ENCODE measurements at regions of chr16 and their contacts with region 1.

Region 1: GRCh38 chr16:75566040-75566810 is at the start of gene GABARAPL2:
- DNase-seq: peak; percentile 67 to 95 (median 87)
- ATAC-seq: peak; percentile 79 to 88 (median 86)
- H3K4me3 ChIP-seq: peak within 1 kb of the TSS; percentile 68 to 94
- H3K4me3 Mint-ChIP-seq: peak within 1 kb of the TSS; percentile 89 to 100 (median 99)
- H3K27ac ChIP-seq: peak within 1 kb of the TSS; percentile 83
- H3K27ac Mint-ChIP-seq: peak within 1 kb of the TSS; percentile 89 to 95
- H3K4me1 ChIP-seq: peaks cover 6 to 37% of the 10 kb centered on the region in 2 experiments
- H3K4me1 Mint-ChIP-seq: peaks cover 38 to 50% (median 48%) of the 10 kb centered on the region in 3 donors
- H3K27me3 ChIP-seq: peaks cover 0 to 4% of the 10 kb centered on the region in 2 experiments
- H3K27me3 Mint-ChIP-seq: peaks cover 9 to 10% of the 10 kb centered on the region in 2 donors
- total RNA-seq, gene GABARAPL2: 70.9 to 78.6 (median 76.4) TPM

Region 2: GRCh38 chr16:75265845-75266701 is 300.2 kb before region 1 on chr16:
- CTCF ChIA-PET with region 1: no interaction called
- POLR2A ChIA-PET with region 1: no interaction called
- DNase-seq: peak in 1 of 35 experiments; percentile 17
- ATAC-seq: peak in 2 of 4 experiments; percentile 15 to 17
- H3K4me3 ChIP-seq: peak overlapping the region; percentile 30 to 60
- H3K4me3 Mint-ChIP-seq: peak overlapping the region; percentile 76 to 77 (median 77)
- H3K27ac ChIP-seq: no peak overlapping the region
- H3K27ac Mint-ChIP-seq: peak overlapping the region; percentile 39 to 62
- H3K4me1 ChIP-seq: peaks cover 0 to 18% of the 10 kb centered on the region in 2 experiments
- H3K4me1 Mint-ChIP-seq: peaks cover 5 to 14% (median 8%) of the 10 kb centered on the region in 3 donors
- H3K27me3 ChIP-seq: peaks cover 0 to 73% of the 10 kb centered on the region in 2 experiments
- H3K27me3 Mint-ChIP-seq: peaks cover 32 to 49% of the 10 kb centered on the region in 2 donors

Region 3: GRCh38 chr16:75519881-75520280 is 46.3 kb before region 1 on chr16:
- CTCF ChIA-PET with region 1: interaction called, 14 to 24 read pairs
- POLR2A ChIA-PET with region 1: no interaction called
- DNase-seq: no peak
- ATAC-seq: no peak
- H3K4me3 ChIP-seq: no peak overlapping the region
- H3K4me3 Mint-ChIP-seq: no peak overlapping the region
- H3K27ac ChIP-seq: no peak overlapping the region
- H3K27ac Mint-ChIP-seq: no peak overlapping the region
- H3K4me1 ChIP-seq: peaks cover 0 to 14% of the 10 kb centered on the region in 2 experiments
- H3K4me1 Mint-ChIP-seq: peaks cover 11 to 13% (median 12%) of the 10 kb centered on the region in 3 donors
- H3K27me3 ChIP-seq: no peaks in the 10 kb centered on the region
- H3K27me3 Mint-ChIP-seq: no peaks in the 10 kb centered on the region

Region 4: GRCh38 chr16:75555707-75556430 is 10.4 kb before region 1 on chr16 and contains the start of gene TMEM231:
- CTCF ChIA-PET with region 1: interaction called, 4 to 22 read pairs
- POLR2A ChIA-PET with region 1: interaction called in 1 of 2 experiments, 10 read pairs
- DNase-seq: peak; percentile 90 to 98 (median 96)
- ATAC-seq: peak; percentile 96 to 98 (median 97)
- H3K4me3 ChIP-seq: peak within 1 kb of the TSS; percentile 61 to 70
- H3K4me3 Mint-ChIP-seq: peak within 1 kb of the TSS; percentile 83 to 89 (median 88)
- H3K27ac ChIP-seq: peak within 1 kb of the TSS; percentile 66
- H3K27ac Mint-ChIP-seq: peak within 1 kb of the TSS; percentile 87 to 89
- H3K4me1 ChIP-seq: peaks cover 3 to 15% of the 10 kb centered on the region in 2 experiments
- H3K4me1 Mint-ChIP-seq: peaks cover 8 to 12% (median 12%) of the 10 kb centered on the region in 3 donors
- H3K27me3 ChIP-seq: peaks cover 0 to 4% of the 10 kb centered on the region in 2 experiments
- H3K27me3 Mint-ChIP-seq: peaks cover 3 to 12% of the 10 kb centered on the region in 2 donors
- total RNA-seq, gene TMEM231: 1.5 to 3.0 (median 2.1) TPM

Region 5: DNA sequence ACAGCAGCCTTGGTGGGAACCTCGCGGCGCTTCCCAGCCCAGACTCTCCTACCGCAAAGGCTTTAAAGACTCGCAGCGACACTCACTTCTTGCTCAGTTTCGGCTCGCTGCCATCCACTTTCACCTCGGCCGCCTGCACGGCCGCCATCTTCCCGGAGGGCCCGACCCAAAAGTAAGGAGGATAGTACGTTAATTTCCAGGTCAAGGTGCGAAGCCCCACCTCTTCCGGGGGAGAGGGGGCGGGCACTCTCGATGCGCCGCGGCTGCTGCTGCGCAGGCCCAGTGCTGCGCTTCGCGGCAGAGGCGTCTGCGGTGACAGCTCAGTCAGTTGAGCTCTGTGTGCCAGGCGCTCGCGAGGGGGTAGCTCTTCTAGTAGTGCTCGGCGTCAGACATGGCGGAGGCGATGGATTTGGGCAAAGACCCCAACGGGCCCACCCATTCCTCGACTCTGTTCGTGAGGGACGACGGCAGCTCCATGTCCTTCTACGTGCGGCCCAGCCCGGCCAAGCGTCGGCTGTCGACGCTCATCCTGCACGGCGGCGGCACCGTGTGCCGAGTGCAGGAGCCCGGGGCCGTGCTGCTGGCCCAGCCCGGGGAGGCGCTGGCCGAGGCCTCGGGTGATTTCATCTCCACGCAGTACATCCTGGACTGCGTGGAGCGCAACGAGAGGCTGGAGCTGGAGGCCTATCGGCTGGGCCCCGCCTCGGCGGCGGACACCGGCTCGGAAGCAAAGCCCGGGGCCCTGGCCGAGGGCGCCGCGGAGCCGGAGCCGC is 81.5 kb after region 1 on chr16 and contains the starts of genes KARS1 and TERF2IP:
- CTCF ChIA-PET with region 1: no interaction called
- POLR2A ChIA-PET with region 1: interaction called, 3 to 13 read pairs
- DNase-seq: peak; percentile 83 to 98 (median 94)
- ATAC-seq: peak; percentile 86 to 88 (median 87)
- H3K4me3 ChIP-seq: peak within 1 kb of the TSS; percentile 89 to 100
- H3K4me3 Mint-ChIP-seq: peak within 1 kb of the TSS; percentile 99 to 100 (median 99)
- H3K27ac ChIP-seq: peak within 1 kb of the TSS; percentile 94
- H3K27ac Mint-ChIP-seq: peak within 1 kb of the TSS; percentile 99
- H3K4me1 ChIP-seq: peaks cover 37 to 54% of the 10 kb centered on the region in 2 experiments
- H3K4me1 Mint-ChIP-seq: peaks cover 66 to 74% (median 69%) of the 10 kb centered on the region in 3 donors
- H3K27me3 ChIP-seq: no peaks in the 10 kb centered on the region
- H3K27me3 Mint-ChIP-seq: no peaks in the 10 kb centered on the region
- total RNA-seq, gene KARS1: 121 to 151 (median 128) TPM
- total RNA-seq, gene TERF2IP: 86.0 to 104 (median 94.0) TPM

Measured in T-cell (primary cell).